ENCODE measurements at regions of chr2 and their contacts with region 1.

Region 1: DNA sequence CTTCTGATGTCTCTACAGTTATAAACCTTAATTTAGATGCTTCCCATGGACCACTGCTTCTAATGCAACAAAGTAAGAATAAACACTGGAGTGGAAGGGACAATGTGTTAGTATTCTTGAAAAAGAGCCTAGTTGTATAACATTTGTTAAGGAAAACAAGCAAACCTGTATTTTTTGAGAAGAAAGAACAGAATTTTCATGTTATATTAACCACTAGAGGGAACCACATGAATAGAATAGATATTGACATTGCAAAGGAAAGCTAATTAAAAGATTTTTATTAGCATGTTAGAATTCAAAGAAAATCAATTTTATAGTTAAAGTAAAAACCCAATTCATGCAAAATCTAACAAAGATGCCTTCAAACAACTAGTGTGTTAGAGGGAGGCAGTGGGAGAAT is 151.2 kb upstream of the BARD1 start:
- DNase-seq: no peak
- H3K4me3 ChIP-seq: no peak overlapping the region
- CTCF ChIP-seq: no peak

Region 2: GRCh38 chr2:214674273-214674672 is 286.4 kb before region 1 on chr2:
- CTCF ChIA-PET with region 1: no interaction called
- POLR2A ChIA-PET with region 1: no interaction called
- DNase-seq: no peak
- H3K4me3 ChIP-seq: no peak overlapping the region
- CTCF ChIP-seq: no peak

Region 3: GRCh38 chr2:215269397-215270119 is 308.9 kb after region 1 on chr2:
- CTCF ChIA-PET with region 1: interaction called, 12 read pairs
- POLR2A ChIA-PET with region 1: no interaction called
- DNase-seq: peak; percentile 21
- H3K4me3 ChIP-seq: no peak overlapping the region
- CTCF ChIP-seq: peak; percentile 64

Region 4: GRCh38 chr2:215931256-215931903 is 970.7 kb after region 1 on chr2:
- CTCF ChIA-PET with region 1: interaction called, 12 read pairs
- POLR2A ChIA-PET with region 1: no interaction called
- DNase-seq: no peak
- H3K4me3 ChIP-seq: no peak overlapping the region
- CTCF ChIP-seq: peak; percentile 79